ENCODE measurements at regions of chr2 and their contacts with region 1.

Region 1: DNA sequence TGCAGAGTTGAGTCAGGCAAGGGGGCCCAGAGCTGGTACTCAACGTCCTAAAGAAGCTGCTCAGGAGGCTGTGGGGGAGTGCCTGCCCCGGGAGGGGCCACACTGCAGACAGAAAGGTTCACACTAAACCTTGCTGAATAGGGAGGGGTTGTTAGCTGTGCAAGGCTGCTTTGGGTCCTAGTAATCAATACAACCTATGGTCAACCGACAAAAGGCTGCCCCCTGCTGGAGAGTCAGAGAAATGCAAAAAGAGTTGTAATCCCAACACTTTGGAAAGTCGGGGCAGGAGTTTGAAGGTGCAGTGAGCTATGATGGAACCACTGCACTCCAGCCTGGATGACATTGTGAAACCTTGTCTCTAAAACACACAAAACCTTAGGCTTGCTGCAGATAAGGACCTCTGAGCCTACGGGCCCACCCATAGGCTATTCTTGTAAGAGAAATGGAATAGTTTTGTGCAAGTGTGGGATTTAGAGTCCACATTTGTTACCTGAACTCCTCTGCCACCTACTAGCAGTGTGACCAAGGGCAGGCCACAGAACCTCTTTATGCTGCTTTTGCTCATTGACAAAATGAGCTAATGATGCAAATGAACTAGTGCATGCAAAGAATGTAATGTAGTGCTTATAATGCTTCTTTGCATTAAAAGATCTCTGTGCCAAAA is 81.5 kb downstream of the PRPF40A start:
- DNase-seq: peak; percentile 50 to 73 (median 68)
- H3K4me3 ChIP-seq: no peak overlapping the region
- H3K27ac ChIP-seq: no peak overlapping the region
- H3K4me1 ChIP-seq: peaks cover 0 to 3% (median 0%) of the 10 kb centered on the region in 3 donors
- H3K27me3 ChIP-seq: no peaks in the 10 kb centered on the region
- CTCF ChIP-seq: peak; percentile 67

Region 2: DNA sequence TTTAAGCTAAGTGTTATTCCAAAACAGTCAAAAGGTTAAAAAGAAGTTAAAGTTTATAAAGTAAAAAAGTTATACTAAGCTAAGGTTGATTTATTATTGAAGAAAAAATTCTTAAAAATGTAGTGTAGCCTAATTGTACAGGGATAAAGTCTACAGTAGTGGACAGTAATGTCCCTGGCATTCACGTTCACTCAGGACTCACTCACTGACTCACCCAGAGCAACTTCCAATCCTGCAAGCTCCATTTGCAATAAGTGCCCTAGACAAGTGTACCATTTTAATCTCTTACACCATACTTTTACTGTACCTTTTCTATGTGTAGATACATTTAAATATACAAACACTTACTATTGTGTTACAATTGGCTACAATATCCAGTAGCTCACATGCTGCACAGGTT is 623.1 kb before region 1 on chr2:
- intact Hi-C with region 1: no loop called
- DNase-seq: no peak
- H3K4me3 ChIP-seq: no peak overlapping the region
- H3K27ac ChIP-seq: no peak overlapping the region
- H3K4me1 ChIP-seq: no peaks in the 10 kb centered on the region
- H3K27me3 ChIP-seq: no peaks in the 10 kb centered on the region
- CTCF ChIP-seq: no peak

Region 3: DNA sequence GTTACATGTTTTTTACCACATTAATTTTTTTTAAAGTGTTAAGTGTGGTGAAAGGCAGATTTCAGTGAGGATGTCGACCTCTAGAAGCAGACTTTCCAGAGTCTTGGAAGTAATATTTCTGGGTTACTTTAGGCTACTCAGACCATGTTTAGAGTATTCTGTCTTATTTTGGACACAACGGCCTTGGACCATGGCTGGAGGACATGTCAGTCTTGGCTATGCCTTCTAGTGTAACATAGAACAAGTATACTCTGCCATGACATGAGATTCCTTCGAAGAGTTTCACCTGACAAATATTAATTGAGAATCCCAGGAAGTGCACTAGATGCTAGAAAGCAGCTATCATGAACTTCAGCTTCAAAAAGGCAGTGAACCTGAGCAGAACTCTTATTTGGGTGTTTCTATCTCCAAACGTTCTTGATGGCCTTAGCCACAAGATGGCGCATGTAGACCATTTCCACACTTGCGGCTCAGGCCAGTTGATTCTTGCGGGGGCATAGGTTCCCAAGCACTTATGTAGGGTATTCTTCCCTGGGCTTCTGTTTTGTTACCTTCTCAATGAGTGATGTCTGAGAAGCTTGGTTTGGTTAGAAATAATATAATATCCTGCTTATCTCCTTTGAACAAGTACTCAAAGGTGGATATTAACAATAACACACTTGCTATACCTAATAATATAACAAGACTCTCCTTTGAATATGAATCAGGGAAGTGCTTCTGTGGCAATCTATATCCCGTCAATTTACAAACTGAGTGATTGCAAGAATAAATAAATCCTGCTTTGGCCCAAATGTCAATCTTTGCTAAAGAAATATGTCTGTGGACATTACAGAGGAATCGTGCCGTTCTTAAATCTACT is 598.9 kb before region 1 on chr2:
- intact Hi-C with region 1: loop called (anchors 10 kb)
- DNase-seq: peak in 4 of 5 donors; percentile 74 to 92 (median 85)
- H3K4me3 ChIP-seq: no peak overlapping the region
- H3K27ac ChIP-seq: no peak overlapping the region
- H3K4me1 ChIP-seq: peaks cover 0 to 7% (median 6%) of the 10 kb centered on the region in 3 donors
- H3K27me3 ChIP-seq: no peaks in the 10 kb centered on the region
- CTCF ChIP-seq: peak; percentile 87

Region 4: GRCh38 chr2:152189622-152190495 is 445.9 kb before region 1 on chr2:
- intact Hi-C with region 1: loop called (anchors 5 kb)
- DNase-seq: peak in 3 of 5 donors; percentile 38 to 93 (median 75)
- H3K4me3 ChIP-seq: no peak overlapping the region
- H3K27ac ChIP-seq: no peak overlapping the region
- H3K4me1 ChIP-seq: no peaks in the 10 kb centered on the region
- H3K27me3 ChIP-seq: no peaks in the 10 kb centered on the region
- CTCF ChIP-seq: peak; percentile 84

Region 5: GRCh38 chr2:153354406-153354805 is 718.6 kb after region 1 on chr2:
- intact Hi-C with region 1: no loop called
- DNase-seq: no peak
- H3K4me3 ChIP-seq: no peak overlapping the region
- H3K27ac ChIP-seq: no peak overlapping the region
- H3K4me1 ChIP-seq: no peaks in the 10 kb centered on the region
- H3K27me3 ChIP-seq: no peaks in the 10 kb centered on the region
- CTCF ChIP-seq: no peak

Region 6: DNA sequence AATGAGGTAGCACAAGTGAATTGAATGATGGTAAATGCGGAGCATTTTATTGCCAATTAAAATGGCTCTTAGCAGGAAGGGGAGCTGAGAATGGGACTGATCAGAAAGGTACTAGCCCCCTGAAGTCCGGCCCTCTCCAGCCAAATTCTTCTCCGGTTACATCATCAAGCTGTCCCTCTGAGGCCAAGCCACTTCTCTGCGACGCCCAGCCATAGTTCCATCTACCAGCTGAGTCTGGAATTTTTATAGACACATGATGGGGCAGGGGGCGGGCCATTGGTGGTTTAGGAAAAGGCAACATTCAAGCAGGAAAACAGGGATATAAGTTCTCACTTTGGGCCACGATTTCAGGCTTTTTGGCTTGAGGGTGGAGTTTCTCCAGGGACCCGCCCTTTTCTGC is 820.1 kb after region 1 on chr2:
- intact Hi-C with region 1: no loop called
- DNase-seq: no peak
- H3K4me3 ChIP-seq: no peak overlapping the region
- H3K27ac ChIP-seq: no peak overlapping the region
- H3K4me1 ChIP-seq: no peaks in the 10 kb centered on the region
- H3K27me3 ChIP-seq: no peaks in the 10 kb centered on the region
- CTCF ChIP-seq: no peak

Measured in kidney (tissue), 22 donors.